ENCODE measurements at regions of chr2 and their contacts with region 1.

Region 1: GRCh38 chr2:237858294-237859081 is 935 bp upstream of the RAMP1 start:
- DNase-seq: peak; percentile 69 to 85
- H3K4me3 ChIP-seq: peak overlapping the region; percentile 76 to 85
- H3K27ac ChIP-seq: peak overlapping the region; percentile 92 to 95
- H3K4me1 ChIP-seq: peaks cover 0 to 30% (median 23%) of the 10 kb centered on the region in 4 donors
- H3K27me3 ChIP-seq: no peaks in the 10 kb centered on the region
- CTCF ChIP-seq: peak; percentile 86 to 89

Region 2: DNA sequence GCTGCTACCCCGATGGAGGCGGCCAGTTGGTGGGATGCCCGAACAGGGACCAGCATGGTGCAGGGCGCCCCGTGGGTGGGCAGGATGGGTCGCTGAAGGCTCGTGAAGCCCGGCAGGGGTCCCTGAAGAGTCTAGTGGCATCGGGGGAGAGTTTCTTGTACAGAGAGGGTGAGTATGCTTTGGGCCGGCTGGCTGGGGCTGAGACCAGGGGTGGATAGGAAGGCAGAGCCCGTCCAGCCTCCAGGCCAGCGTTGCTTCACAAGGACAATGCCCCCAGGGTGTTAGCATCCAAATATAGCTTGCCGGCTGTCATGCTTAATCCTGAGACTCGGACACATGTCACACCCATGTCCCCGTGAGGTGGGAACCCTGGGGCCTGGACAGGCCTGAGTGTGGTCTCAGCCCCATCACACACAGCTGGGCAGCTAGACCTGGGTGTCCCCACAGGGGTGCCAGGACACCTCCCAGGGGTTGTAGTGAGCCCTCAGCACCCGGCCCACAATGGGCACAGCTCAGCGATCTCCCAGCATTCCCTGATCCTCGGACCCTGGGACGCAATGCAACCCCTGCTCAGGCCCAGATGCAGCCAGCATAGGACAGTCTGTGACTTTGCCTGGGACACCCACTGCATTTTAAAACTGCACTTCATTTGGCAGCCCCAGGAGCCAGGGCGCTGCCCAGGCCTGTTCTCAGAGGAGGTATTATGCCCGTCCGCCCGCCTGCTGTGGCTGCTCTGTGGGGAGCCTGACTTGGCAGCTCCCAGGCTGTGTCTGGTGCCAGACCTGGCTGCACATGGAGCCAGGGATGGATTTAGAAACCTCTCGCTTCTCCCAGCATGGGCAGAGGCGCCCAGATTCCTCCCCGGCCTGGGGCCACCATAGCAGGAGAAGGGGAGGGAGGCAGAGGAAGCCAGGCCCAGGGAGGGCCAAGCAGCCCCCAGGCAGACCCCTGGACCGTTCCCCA is 37.3 kb after region 1 on chr2:
- intact Hi-C with region 1: loop called (anchors 5 kb)
- DNase-seq: peak; percentile 77 to 94
- H3K4me3 ChIP-seq: no peak overlapping the region
- H3K27ac ChIP-seq: peak overlapping the region; percentile 94 to 99
- H3K4me1 ChIP-seq: peaks cover 0 to 94% (median 60%) of the 10 kb centered on the region in 4 donors
- H3K27me3 ChIP-seq: no peaks in the 10 kb centered on the region
- CTCF ChIP-seq: no peak

Region 3: DNA sequence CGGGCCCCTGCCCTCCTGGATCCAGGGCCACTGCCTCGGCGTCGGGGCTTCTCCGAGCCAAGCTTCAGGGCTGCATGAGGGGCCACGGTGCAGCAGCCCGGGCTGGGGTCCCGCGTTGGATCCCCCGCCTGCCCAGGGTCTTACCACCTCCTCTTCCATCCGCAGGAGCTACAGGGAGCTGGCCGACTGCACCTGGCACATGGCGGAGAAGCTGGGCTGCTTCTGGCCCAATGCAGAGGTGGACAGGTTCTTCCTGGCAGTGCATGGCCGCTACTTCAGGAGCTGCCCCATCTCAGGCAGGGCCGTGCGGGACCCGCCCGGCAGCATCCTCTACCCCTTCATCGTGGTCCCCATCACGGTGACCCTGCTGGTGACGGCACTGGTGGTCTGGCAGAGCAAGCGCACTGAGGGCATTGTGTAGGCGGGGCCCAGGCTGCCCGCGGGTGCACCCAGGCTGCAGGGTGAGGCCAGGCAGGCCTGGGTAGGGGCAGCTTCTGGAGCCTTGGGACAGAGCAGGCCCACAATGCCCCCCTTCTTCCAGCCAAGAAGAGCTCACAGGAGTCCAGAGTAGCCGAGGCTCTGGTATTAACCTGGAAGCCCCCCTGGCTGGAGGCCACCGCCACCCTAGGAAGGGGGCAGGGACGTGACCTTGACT is 53.0 kb after region 1 on chr2:
- intact Hi-C with region 1: no loop called
- DNase-seq: peak in 1 of 2 donors; percentile 65
- H3K4me3 ChIP-seq: no peak overlapping the region
- H3K27ac ChIP-seq: peak overlapping the region; percentile 24 to 33
- H3K4me1 ChIP-seq: peaks cover 0 to 3% (median 0%) of the 10 kb centered on the region in 4 donors
- H3K27me3 ChIP-seq: no peaks in the 10 kb centered on the region
- CTCF ChIP-seq: no peak

Region 4: DNA sequence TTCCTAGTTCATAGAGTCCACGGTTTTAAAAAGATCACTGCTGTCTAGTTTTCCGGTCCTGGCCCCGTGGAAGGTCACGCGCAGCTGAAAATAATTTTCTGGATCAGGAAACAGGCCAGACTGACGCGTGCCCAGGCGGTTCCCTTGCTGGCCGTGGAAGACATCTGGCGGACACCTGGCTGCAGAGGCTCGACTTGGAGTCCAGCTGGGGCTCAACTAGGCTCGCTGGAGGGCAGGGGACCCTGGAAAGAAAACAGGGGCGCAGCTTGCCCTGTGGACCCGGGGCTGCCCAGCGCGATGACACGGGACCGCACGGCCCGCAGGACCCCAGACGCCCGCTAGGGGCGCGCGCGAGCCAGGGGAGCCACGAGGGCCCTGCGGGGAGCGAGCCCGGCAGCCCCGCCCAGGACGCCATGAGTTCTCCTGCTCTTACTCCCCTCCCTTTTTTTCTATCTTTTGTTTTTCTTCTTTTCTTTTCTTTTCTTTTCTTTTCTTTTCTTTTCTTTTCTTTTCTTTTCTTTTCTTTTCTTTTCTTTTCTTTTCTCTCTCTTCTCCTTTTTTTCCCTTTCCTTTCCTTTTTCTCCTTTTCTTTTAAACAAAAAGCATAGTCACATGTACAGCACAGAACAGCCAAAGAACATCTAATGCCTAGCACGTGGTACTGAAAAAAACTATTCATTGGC is 65.1 kb after region 1 on chr2:
- intact Hi-C with region 1: loop called (anchors 2 kb)
- DNase-seq: peak; percentile 76 to 89
- H3K4me3 ChIP-seq: peak overlapping the region; percentile 43 to 44
- H3K27ac ChIP-seq: peak overlapping the region; percentile 82 to 83
- H3K4me1 ChIP-seq: peaks cover 0 to 40% (median 23%) of the 10 kb centered on the region in 4 donors
- H3K27me3 ChIP-seq: no peaks in the 10 kb centered on the region
- CTCF ChIP-seq: peak; percentile 99

Region 5: DNA sequence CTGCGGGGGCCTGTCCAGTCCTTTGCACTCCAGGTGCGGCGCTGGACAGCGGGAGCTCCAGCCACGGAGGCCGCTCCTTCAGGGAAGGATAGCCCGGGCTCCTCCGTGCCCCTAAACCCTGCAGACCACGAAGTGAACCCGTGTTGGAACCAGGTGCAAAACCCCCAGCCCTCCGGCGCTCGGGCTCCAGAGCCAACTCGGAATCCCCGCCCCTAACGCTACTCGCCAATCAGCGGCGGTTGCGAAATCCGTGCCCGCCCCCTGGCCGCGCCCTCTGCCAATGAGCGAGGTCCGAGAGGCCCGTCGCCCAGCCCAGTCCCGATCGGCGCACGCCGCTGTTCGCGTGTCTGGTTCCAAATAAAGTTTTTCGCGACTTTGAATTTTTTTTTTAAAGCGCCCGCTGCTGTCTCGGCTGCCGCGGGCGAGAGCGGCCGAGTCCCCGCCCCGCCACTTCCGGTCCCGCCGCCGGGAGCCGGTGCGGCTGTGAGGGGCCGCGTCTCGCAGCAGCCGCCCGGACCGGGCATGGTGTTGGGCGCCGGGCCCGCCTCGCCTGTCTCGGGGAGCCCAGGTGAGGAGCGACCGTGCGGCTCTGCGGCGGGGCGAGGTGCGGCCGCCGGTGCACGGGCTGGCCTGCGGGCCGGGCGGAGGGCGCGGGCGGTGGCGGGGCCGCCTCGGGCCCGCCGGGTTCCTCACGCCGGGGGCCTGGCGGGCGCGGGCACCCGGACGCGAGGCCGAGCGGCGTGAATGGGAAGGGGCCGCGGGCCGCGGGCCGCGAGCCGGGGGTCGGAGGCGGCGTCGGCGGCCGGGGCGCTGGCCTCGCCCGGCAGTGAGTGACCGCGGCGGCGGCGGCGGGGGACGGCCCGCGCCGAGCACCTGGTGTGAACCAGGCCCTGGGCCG is 108.3 kb after region 1 on chr2 and contains the start of gene UBE2F:
- intact Hi-C with region 1: loop called (anchors 5 kb)
- DNase-seq: peak; percentile 96 to 98
- H3K4me3 ChIP-seq: peak within 1 kb of the TSS; percentile 65 to 82
- H3K27ac ChIP-seq: peak within 1 kb of the TSS; percentile 68 to 72
- H3K4me1 ChIP-seq: peaks cover 0 to 42% (median 26%) of the 10 kb centered on the region in 4 donors
- H3K27me3 ChIP-seq: no peaks in the 10 kb centered on the region
- CTCF ChIP-seq: no peak

Region 6: GRCh38 chr2:237996021-237996593 is 137.6 kb after region 1 on chr2:
- intact Hi-C with region 1: no loop called
- DNase-seq: peak in 1 of 2 donors; percentile 70
- H3K4me3 ChIP-seq: no peak overlapping the region
- H3K27ac ChIP-seq: peak overlapping the region; percentile 53 to 62
- H3K4me1 ChIP-seq: peaks cover 0 to 25% (median 0%) of the 10 kb centered on the region in 4 donors
- H3K27me3 ChIP-seq: no peaks in the 10 kb centered on the region
- CTCF ChIP-seq: no peak

Region 7: DNA sequence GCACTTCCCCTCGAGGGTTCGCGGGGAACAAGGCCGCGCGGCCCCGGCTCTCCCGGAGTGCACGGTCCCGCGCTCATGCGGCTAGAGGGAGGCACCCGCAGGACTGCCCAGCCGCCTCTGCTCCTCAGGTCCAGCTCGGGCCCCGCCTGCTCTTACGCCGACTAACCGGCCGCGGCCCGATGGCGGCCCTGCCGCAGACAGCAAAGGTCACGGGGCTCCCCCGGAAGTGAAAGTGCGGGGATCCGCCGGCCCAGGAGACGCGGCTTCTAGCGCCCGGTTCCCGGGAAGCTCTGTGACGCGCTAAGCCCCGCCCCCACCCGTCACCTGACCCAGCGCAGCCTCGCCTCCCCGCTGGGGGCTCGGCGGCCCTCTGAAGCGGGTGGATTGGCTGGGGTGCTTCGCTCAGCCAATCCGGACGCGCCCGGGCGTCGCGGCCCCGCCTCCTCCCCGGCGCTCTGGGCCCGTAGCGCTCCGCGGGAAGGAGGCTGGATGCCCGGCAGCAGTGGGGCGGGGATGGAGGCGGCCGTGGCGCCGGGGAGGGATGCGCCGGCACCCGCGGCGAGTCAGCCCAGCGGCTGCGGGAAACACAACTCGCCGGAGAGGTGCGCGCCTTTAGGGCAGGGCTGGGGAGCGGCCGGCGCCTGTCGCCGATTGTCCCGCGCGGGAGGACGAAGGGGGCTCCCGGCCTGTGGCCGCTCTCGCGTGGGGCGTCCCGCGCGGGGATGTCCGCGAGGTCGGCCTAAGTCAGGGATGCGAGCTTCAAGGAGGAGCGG is 202.2 kb after region 1 on chr2 and contains the start of gene SCLY:
- intact Hi-C with region 1: loop called (anchors 10 kb)
- DNase-seq: peak; percentile 95 to 99
- H3K4me3 ChIP-seq: peak within 1 kb of the TSS; percentile 69 to 89
- H3K27ac ChIP-seq: peak within 1 kb of the TSS; percentile 85 to 90
- H3K4me1 ChIP-seq: peaks cover 0 to 17% (median 10%) of the 10 kb centered on the region in 4 donors
- H3K27me3 ChIP-seq: no peaks in the 10 kb centered on the region
- CTCF ChIP-seq: no peak

Region 8: DNA sequence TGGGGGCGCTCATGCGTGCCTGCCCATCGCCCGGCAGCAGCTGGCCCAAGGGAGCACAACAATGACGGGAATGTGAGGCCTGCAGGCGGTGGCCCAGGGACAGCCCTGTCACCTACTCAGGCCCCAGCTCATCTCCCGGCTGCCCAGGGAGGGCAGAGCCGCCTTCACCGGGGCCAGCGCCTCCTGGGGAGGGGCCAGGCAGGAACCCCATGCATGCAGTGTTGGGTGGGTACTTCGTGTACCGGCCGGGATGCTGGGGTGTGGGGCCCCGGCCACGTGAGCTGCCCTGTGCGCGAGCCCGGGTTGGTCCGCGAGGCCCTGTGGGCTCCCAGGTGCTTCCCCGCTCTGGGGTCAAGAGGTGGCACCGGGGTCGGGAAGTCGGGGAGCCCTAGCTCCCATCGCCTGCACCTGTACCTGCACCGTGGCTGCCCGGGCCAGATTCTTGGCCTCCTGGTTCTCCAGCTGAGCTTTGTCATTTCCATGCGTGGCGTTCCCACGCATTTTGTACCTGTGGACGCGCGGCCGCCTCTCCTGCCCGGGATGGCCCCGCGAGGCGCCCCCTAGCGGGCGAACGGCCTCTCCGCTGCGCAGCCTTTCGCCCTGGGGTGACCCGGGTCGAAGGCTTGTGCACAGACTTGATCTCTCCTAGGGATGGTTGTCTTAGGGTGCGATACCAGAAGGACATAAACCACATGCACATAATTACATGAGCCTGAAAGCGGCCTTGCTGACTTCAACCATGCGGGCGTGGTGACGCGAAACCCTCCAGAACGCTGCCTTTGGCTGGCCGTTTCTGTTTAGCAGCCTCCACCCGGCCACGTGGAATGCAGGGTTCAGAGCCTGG is 280.9 kb after region 1 on chr2:
- intact Hi-C with region 1: loop called (anchors 5 kb)
- DNase-seq: no peak
- H3K4me3 ChIP-seq: peak overlapping the region; percentile 58 to 64
- H3K27ac ChIP-seq: peak overlapping the region; percentile 71 to 91
- H3K4me1 ChIP-seq: peaks cover 0 to 80% (median 65%) of the 10 kb centered on the region in 4 donors
- H3K27me3 ChIP-seq: no peaks in the 10 kb centered on the region
- CTCF ChIP-seq: peak; percentile 54 to 57

Region 9: GRCh38 chr2:238263204-238264071 is 404.9 kb after region 1 on chr2:
- intact Hi-C with region 1: loop called (anchors 2 kb)
- DNase-seq: peak; percentile 97
- H3K4me3 ChIP-seq: no peak overlapping the region
- H3K27ac ChIP-seq: peak overlapping the region; percentile 41 to 49
- H3K4me1 ChIP-seq: peaks cover 0 to 23% (median 9%) of the 10 kb centered on the region in 4 donors
- H3K27me3 ChIP-seq: no peaks in the 10 kb centered on the region
- CTCF ChIP-seq: peak; percentile 75 to 90